Activated CD4-positive, alpha-beta T cell treated with anti-CD3 and anti-CD28 coated beads for 36 hours (primary cell): ENCODE measurements at regions of chr1 and their contacts with region 1.

Region 1: GRCh38 chr1:156368889-156369684 is at the start of gene RHBG:
- DNase-seq: peak; percentile 35
- ATAC-seq: peak; percentile 51
- H3K4me3 Mint-ChIP-seq: peak within 1 kb of the TSS; percentile 47
- H3K27ac Mint-ChIP-seq: no peak within 1 kb of the TSS
- H3K4me1 Mint-ChIP-seq: peaks cover 2% of the 10 kb centered on the region
- H3K27me3 Mint-ChIP-seq: peaks cover 23% of the 10 kb centered on the region
- total RNA-seq, gene RHBG: not detected

Region 2: DNA sequence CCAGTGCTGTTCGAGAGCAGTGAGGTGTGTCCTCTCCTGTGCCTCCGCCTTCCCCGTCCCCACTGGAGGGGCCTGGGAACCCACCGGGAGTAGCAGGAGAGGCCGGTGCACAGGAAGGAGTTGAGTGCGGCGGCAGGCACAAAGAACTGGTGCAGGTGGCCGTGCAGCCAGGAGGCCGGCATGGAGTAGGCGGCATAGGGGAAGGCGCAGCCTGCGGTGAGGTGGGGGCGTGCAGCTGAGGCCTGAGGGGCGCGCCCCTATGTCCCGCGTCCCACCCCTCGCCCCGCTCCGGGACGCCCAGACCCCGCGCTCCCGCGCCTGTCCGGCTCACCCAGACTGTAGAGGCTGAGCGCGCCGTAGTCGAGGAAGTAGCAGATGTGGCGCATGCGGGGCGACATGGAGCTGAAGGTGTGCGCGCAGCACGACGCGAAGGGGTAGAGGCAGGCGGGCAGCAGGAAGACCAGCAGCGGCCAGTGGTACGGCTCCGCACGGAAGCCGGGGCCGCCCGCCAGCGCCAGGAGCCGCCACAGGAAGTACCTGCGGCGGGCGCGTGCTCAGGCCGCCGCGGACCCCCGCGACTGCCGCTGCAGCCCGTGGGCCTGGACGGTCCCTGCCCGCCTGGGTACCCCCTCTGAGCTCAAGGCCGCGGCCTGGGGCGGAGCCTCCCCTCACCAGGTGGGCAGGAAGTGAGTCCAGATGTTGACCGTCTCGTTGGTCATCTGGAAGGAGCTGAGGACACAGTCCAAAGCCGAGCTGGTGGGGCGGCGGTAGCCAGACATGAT is 123.4 kb before region 1 on chr1:
- CTCF ChIA-PET with region 1: no interaction called
- POLR2A ChIA-PET with region 1: no interaction called
- intact Hi-C with region 1: no loop called
- DNase-seq: peak; percentile 64
- ATAC-seq: peak; percentile 55
- H3K4me3 Mint-ChIP-seq: peak overlapping the region; percentile 59
- H3K27ac Mint-ChIP-seq: peak overlapping the region; percentile 25
- H3K4me1 Mint-ChIP-seq: peaks cover 11% of the 10 kb centered on the region
- H3K27me3 Mint-ChIP-seq: peaks cover 4% of the 10 kb centered on the region

Region 3: DNA sequence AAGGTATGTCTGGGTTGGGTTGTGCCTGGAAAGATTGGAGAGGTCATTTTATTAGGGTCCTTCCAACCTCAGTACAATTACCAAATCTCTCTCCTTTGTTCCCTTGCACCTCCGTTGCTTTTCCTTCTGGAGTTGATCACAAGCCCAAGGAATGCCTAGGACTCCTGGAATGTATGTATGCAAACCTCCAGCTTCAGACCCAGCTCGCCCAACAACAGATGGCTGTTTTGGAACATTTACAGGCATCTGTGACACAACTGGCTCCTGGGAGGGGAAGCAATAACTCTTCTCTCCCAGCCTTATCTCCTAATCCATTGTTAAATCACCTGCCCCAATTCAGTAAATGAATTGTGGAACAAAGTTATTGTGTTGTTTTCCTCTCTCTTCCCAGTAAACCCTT is 22.5 kb before region 1 on chr1:
- CTCF ChIA-PET with region 1: no interaction called
- POLR2A ChIA-PET with region 1: no interaction called
- intact Hi-C with region 1: loop called in 1 of 2 experiments (anchors 2 kb)
- DNase-seq: no peak
- ATAC-seq: no peak
- H3K4me3 Mint-ChIP-seq: no peak overlapping the region
- H3K27ac Mint-ChIP-seq: no peak overlapping the region
- H3K4me1 Mint-ChIP-seq: no peaks in the 10 kb centered on the region
- H3K27me3 Mint-ChIP-seq: peaks cover 7% of the 10 kb centered on the region

Region 4: GRCh38 chr1:156551866-156552265 is 182.8 kb after region 1 on chr1:
- CTCF ChIA-PET with region 1: no interaction called
- POLR2A ChIA-PET with region 1: no interaction called
- intact Hi-C with region 1: loop called in 1 of 2 experiments (anchors 10 kb)
- DNase-seq: no peak
- ATAC-seq: no peak
- H3K4me3 Mint-ChIP-seq: no peak overlapping the region
- H3K27ac Mint-ChIP-seq: no peak overlapping the region
- H3K4me1 Mint-ChIP-seq: peaks cover 4% of the 10 kb centered on the region
- H3K27me3 Mint-ChIP-seq: no peaks in the 10 kb centered on the region